ENCODE measurements at regions of chr11 and their contacts with region 1.

Region 1: GRCh38 chr11:19508159-19508558 is 204.5 kb upstream of the NAV2 start:
- DNase-seq: no peak
- ATAC-seq: peak in 3 of 4 donors; percentile 37 to 61 (median 56)
- H3K4me3 ChIP-seq: no peak overlapping the region
- H3K27ac ChIP-seq: no peak overlapping the region
- H3K4me1 ChIP-seq: no peaks in the 10 kb centered on the region
- H3K27me3 ChIP-seq: peaks cover 0 to 9% (median 3%) of the 10 kb centered on the region in 3 donors
- CTCF ChIP-seq: no peak

Region 2: DNA sequence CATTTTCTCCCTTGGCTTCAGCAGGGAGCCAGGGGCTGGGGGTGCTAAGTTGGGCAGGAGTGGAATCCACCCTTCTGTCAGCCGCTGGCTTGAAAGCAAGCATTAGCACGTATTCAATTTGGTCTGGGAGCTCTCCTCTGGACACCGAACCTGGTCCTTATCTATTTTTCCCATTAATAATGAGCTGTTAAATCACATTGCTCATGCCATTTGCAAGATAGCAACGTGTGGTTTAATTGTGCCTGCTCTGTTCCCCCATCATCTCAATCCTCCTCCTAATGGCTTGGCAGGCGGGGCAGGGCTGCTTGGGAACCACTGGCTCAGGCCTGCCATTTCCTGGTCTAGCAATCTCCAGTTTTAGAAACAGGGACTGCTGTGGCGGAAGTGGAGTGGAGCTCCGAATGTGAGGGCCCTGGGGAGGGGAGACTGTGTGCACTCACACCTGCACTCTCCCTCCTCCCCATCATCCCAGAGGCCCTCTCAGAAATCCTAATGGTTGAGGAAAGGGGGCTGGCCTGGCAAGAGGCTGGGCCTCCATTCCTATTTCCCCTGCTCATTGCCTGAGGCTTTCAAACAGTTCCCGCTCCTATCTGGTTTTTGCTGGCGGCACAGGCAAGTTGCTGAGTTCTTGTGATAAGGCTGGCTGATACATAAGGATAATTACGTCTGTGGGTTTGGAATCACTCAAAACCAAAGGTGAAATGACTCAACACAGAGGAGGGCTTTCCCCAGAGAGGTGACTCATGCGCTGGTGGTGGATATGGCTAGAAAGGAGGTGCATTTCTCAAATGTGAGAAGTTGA is 66.2 kb before region 1 on chr11:
- intact Hi-C with region 1: loop called in 1 of 2 experiments (anchors 10 kb)
- DNase-seq: peak in 1 of 2 donors; percentile 51
- ATAC-seq: no peak
- H3K4me3 ChIP-seq: no peak overlapping the region
- H3K27ac ChIP-seq: no peak overlapping the region
- H3K4me1 ChIP-seq: no peaks in the 10 kb centered on the region
- H3K27me3 ChIP-seq: no peaks in the 10 kb centered on the region
- CTCF ChIP-seq: no peak